ENCODE measurements at regions of chr6 and their contacts with region 1.

Region 1: DNA sequence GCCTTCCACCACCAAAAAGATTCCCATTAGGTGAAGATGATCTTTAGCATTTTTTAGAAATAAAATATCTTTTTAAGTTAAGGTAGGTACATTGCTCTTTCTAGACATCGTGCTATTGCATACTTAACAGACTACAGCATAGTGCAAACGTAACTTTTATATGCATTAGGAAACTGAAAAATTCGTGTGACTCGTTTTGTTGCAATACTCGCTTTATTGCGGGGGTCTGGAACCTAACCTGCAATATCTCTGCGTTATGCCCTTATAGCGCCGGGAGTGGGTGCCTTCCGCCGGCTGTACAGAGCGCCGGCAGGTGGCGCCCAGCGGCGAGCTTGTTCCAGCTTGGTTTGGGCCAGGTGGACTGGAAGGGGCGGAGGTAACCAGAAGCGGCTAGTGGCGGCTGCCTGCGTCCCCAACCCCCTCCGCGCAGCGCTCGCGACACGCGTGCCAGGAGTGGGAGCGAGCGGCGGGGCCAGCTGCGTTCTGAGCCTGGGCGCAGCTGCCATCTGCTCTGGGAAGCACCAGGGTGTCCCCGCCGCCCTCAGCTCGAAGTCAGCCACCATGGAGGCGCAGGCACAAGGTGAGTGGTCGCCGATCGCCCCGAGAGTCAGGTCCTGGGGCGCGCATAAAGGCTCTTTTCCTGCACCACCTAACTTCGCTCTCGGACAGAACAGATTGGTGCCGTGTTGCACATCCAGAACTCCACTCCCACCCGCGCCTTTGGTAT is at the start of gene TPD52L1:
- DNase-seq: peak; percentile 81 to 88 (median 87)
- ATAC-seq: peak; percentile 92 to 95 (median 95)
- H3K4me3 ChIP-seq: peak within 1 kb of the TSS; percentile 53 to 90 (median 70)
- H3K27ac ChIP-seq: peak within 1 kb of the TSS; percentile 51 to 89 (median 69)
- H3K4me1 ChIP-seq: peaks cover 0 to 27% (median 13%) of the 10 kb centered on the region in 12 donors
- H3K27me3 ChIP-seq: peaks cover 0 to 15% (median 0%) of the 10 kb centered on the region in 9 donors
- CTCF ChIP-seq: peak; percentile 71 to 97 (median 87)
- POLR2A ChIP-seq: peak in 1 of 2 donors; percentile 16
- total RNA-seq, gene TPD52L1: 47.0 to 146 (median 74.2) TPM

Region 2: DNA sequence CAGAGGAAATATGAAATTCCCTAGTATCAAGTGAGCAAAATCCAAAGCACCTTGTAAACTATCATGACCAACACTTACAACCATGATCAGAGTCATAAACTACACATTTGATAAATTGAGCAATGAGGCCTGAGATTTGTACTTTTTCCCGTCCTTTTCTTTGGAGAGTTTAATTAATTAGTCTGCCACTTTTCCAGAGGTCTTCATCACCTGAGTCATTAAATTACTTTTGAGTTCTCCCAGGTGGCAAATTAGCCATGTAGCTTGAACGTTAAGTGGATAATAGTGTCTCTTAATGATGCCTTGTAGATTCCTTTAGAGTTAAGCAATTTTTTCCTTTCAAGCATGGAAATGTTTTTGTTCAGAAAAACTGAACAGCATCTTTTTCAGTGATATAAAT is 115.7 kb before region 1 on chr6:
- intact Hi-C with region 1: no loop called
- DNase-seq: no peak
- ATAC-seq: no peak
- H3K4me3 ChIP-seq: no peak overlapping the region
- H3K27ac ChIP-seq: no peak overlapping the region
- H3K4me1 ChIP-seq: peaks cover 0 to 15% (median 5%) of the 10 kb centered on the region in 12 donors
- H3K27me3 ChIP-seq: no peaks in the 10 kb centered on the region
- CTCF ChIP-seq: no peak
- POLR2A ChIP-seq: no peak

Region 3: GRCh38 chr6:125197795-125198269 is 44.3 kb after region 1 on chr6:
- intact Hi-C with region 1: loop called in 3 of 10 experiments (anchors 2 to 5 kb)
- DNase-seq: peak; percentile 56 to 84 (median 71)
- ATAC-seq: peak; percentile 92 to 98 (median 94)
- H3K4me3 ChIP-seq: peak overlapping the region in 1 of 12 donors; percentile 4
- H3K27ac ChIP-seq: peak overlapping the region; percentile 59 to 91 (median 83)
- H3K4me1 ChIP-seq: peaks cover 0 to 70% (median 41%) of the 10 kb centered on the region in 12 donors
- H3K27me3 ChIP-seq: no peaks in the 10 kb centered on the region
- CTCF ChIP-seq: no peak
- POLR2A ChIP-seq: no peak

Region 4: GRCh38 chr6:125219361-125219895 is 65.9 kb after region 1 on chr6:
- intact Hi-C with region 1: loop called in 2 of 10 experiments (anchors 5 to 10 kb)
- DNase-seq: no peak
- ATAC-seq: no peak
- H3K4me3 ChIP-seq: no peak overlapping the region
- H3K27ac ChIP-seq: no peak overlapping the region
- H3K4me1 ChIP-seq: peaks cover 0 to 62% (median 17%) of the 10 kb centered on the region in 12 donors
- H3K27me3 ChIP-seq: no peaks in the 10 kb centered on the region
- CTCF ChIP-seq: no peak
- POLR2A ChIP-seq: no peak

Region 5: DNA sequence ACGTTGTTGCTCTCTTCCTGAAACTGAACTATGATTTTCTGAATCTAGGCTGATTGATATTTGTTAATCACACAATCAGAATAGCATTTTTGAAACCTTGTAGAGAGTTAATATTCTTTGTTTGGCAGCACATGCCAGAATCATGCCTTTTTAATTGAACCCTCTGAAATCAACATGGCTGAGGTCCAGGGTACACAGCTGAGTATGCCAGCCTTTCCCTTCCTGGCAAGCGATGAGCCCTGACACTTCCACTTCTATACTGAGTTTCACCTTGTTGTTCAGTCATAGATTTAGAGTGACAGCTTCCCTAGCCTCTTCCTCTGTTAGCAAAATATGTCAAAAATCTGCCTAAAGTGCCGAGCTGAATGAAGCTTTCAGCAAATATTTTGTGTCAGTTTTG is 141.4 kb after region 1 on chr6:
- intact Hi-C with region 1: loop called in 9 of 10 experiments (anchors 2 to 5 kb)
- DNase-seq: peak in 2 of 5 donors; percentile 37 to 53
- ATAC-seq: peak; percentile 82 to 89 (median 86)
- H3K4me3 ChIP-seq: no peak overlapping the region
- H3K27ac ChIP-seq: peak overlapping the region in 10 of 12 donors; percentile 40 to 71 (median 60)
- H3K4me1 ChIP-seq: peaks cover 0 to 53% (median 27%) of the 10 kb centered on the region in 12 donors
- H3K27me3 ChIP-seq: no peaks in the 10 kb centered on the region
- CTCF ChIP-seq: no peak
- POLR2A ChIP-seq: no peak

Region 6: DNA sequence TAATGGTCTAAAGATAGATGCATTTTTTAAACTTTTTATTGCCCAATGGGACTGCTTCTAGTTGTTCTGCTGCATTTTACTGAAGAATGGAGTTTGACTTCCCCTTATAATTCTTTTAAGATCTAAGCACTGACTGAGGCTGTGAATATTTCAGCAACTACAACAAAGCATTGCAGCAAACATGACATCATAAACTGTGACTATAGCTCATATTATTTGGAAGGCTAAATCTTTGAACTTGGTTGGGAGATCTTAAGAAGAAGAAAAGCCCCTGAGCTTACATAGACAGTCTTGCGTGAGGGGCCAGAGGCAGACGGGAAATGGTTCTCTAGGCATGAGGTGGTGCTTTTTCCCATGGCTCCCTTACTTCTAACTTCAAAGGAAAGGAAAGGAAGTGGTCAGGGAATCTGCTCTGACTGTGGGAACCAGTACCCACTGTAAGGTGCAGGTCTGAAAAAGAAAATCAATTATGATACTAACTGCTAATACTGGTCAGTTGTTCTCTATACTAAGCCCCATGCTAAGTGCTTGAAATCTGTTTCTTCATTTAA is 610.6 kb after region 1 on chr6:
- intact Hi-C with region 1: loop called in 4 of 10 experiments (anchors 2 to 10 kb)
- DNase-seq: no peak
- ATAC-seq: no peak
- H3K4me3 ChIP-seq: no peak overlapping the region
- H3K27ac ChIP-seq: peak overlapping the region in 4 of 12 donors; percentile 1 to 26 (median 16)
- H3K4me1 ChIP-seq: peaks cover 0 to 49% (median 4%) of the 10 kb centered on the region in 12 donors
- H3K27me3 ChIP-seq: peaks cover 0 to 7% (median 0%) of the 10 kb centered on the region in 9 donors
- CTCF ChIP-seq: no peak
- POLR2A ChIP-seq: no peak

Region 7: DNA sequence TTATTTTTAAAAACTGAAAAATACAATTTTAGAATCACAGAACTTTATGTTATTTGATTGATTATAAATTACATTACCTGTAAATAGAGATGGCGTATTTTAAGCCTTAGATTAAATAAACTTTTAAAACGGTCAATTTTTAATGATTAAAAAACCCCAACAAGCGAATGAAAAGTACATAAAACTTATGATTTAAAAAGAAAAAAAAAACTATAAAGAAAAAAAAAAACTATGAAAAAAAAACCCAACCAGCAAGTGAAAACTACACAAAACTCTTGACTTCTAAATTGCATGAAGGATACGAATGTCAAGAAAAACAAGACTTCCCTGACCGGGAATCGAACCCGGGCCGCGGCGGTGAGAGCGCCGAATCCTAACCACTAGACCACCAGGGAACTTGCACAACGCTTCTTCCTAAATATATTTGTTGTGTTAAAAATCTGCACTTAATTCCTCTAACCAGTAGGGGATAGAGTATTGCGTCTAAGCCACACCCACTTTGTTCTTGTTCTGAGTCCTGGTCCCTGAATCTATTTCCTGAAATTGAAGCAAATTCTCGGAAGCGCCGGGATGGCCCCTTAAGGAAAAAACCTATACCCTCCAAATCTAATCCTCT is 626.5 kb after region 1 on chr6:
- intact Hi-C with region 1: loop called in 1 of 10 experiments (anchors 10 kb)
- DNase-seq: peak; percentile 67 to 88 (median 80)
- ATAC-seq: peak; percentile 95 to 98 (median 97)
- H3K4me3 ChIP-seq: peak overlapping the region; percentile 28 to 76 (median 64)
- H3K27ac ChIP-seq: peak overlapping the region; percentile 73 to 98 (median 90)
- H3K4me1 ChIP-seq: peaks cover 0 to 12% (median 7%) of the 10 kb centered on the region in 12 donors
- H3K27me3 ChIP-seq: no peaks in the 10 kb centered on the region
- CTCF ChIP-seq: peak in 11 of 12 donors; percentile 19 to 56 (median 39)
- POLR2A ChIP-seq: no peak